GM12878 (cell line): ENCODE measurements at regions of chr6 and their contacts with region 1.

Region 1: GRCh38 chr6:11144393-11144851 is 32.9 kb upstream of the ERVFRD-1 start:
- DNase-seq: peak; percentile 49
- ATAC-seq: peak; percentile 99
- H3K4me3 ChIP-seq: no peak overlapping the region
- H3K27ac ChIP-seq: no peak overlapping the region
- H3K4me1 ChIP-seq: peaks cover 3% of the 10 kb centered on the region; the same call in 1 of the 2 replicates
- H3K27me3 ChIP-seq: no peaks in the 10 kb centered on the region
- CTCF ChIP-seq: peak; percentile 93 to 97 (median 95)
- EP300 ChIP-seq: no peak
- POLR2A ChIP-seq: no peak
- RAD21 ChIP-seq: peak; percentile 100

Region 2: GRCh38 chr6:10954590-10955010 is 189.8 kb before region 1 on chr6:
- CTCF ChIA-PET with region 1: interaction called, 3 read pairs
- POLR2A ChIA-PET with region 1: no interaction called
- RAD21 ChIA-PET with region 1: interaction called, 4 read pairs
- SMC1A ChIA-PET with region 1: interaction called, 3 read pairs
- in situ Hi-C with region 1: no loop called
- intact Hi-C with region 1: loop called (anchors 5 kb)
- DNase-seq: peak; percentile 31
- ATAC-seq: peak; percentile 99
- H3K4me3 ChIP-seq: no peak overlapping the region
- H3K27ac ChIP-seq: no peak overlapping the region
- H3K4me1 ChIP-seq: no peaks in the 10 kb centered on the region
- H3K27me3 ChIP-seq: no peaks in the 10 kb centered on the region
- CTCF ChIP-seq: peak; percentile 89 to 97 (median 92)
- EP300 ChIP-seq: no peak
- POLR2A ChIP-seq: no peak
- RAD21 ChIP-seq: peak; percentile 70

Region 3: GRCh38 chr6:11021003-11021402 is 123.4 kb before region 1 on chr6:
- CTCF ChIA-PET with region 1: no interaction called
- POLR2A ChIA-PET with region 1: no interaction called
- RAD21 ChIA-PET with region 1: no interaction called
- SMC1A ChIA-PET with region 1: no interaction called
- in situ Hi-C with region 1: no loop called
- intact Hi-C with region 1: no loop called
- DNase-seq: no peak
- ATAC-seq: no peak
- H3K4me3 ChIP-seq: no peak overlapping the region
- H3K27ac ChIP-seq: no peak overlapping the region
- H3K4me1 ChIP-seq: peaks cover 4% of the 10 kb centered on the region; the same call in 1 of the 2 replicates
- H3K27me3 ChIP-seq: peaks cover 5 to 10% of the 10 kb centered on the region in 2 experiments; a peak in 3 of 4 replicates
- CTCF ChIP-seq: no peak
- EP300 ChIP-seq: no peak
- POLR2A ChIP-seq: no peak
- RAD21 ChIP-seq: no peak

Region 4: DNA sequence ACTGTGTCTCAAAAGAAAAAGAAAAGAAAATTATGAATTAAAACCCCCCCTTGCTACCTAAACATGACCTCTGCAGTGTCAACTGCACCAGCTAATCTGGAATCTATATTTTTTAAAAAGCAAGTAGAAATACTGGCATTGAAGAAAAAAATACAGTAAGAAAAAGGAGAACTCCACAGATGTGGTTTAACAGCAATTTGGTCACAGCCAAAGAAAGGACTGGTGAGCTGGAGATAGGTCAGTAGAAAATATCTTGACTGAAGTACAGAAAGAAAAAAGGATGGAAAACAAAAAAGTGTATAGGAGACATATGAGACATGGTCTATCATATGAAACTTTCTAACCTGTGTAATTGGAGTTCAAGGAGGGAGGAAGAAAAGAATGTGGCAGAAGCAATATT is 11.2 kb after region 1 on chr6:
- CTCF ChIA-PET with region 1: interaction called, 33 read pairs
- POLR2A ChIA-PET with region 1: no interaction called
- RAD21 ChIA-PET with region 1: interaction called, 4 read pairs
- SMC1A ChIA-PET with region 1: interaction called, 6 read pairs
- in situ Hi-C with region 1: no loop called
- intact Hi-C with region 1: no loop called
- DNase-seq: no peak
- ATAC-seq: no peak
- H3K4me3 ChIP-seq: no peak overlapping the region
- H3K27ac ChIP-seq: no peak overlapping the region
- H3K4me1 ChIP-seq: no peaks in the 10 kb centered on the region
- H3K27me3 ChIP-seq: no peaks in the 10 kb centered on the region
- CTCF ChIP-seq: no peak
- EP300 ChIP-seq: no peak
- POLR2A ChIP-seq: no peak
- RAD21 ChIP-seq: no peak